ENCODE measurements at regions of chr14 and their contacts with region 1.

Region 1: DNA sequence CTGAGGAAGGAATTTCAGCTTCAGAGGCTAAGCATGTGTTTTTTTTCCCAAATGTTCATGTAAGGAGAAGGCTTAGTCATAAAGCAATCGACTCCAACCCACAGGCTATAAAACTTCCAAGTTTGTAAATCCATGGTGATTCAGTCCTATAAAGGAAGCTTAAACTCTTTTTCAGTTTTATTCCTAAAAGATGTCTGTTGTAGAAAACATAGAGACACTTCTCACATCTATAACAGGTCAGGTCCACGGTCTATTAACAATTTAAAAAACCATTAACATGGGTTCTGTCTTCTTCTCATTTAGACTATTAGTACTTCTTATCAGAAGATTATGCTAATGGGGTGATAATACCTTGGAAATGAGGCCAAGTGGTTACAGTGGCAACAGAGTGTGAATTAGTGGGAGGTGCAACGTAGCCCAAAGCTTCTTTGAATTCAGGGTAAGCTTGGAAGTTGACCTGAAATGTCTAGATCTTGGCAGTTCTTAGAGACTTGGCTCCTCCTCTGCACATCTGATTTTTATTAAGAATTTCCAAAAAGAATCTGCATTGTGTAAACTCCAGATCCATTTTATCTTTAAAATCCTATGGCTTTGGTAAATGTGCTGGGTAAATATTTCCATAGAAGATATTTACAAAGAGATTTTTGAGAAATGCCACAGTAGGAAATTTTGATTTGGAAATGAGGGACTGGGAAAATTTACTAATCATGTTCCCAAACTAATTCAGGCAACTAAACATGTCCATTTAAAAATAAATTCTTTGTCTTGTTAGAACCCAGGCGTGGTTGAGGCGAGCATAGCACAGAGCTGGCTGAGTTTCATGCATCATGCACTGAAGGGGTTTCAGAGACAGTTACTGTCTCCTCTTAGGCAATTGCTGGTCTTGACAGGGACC is 86.4 kb downstream of the EML1 start:
- DNase-seq: no peak
- H3K4me3 ChIP-seq: no peak overlapping the region
- H3K27ac ChIP-seq: peak overlapping the region; percentile 64
- H3K4me1 ChIP-seq: peaks cover 18% of the 10 kb centered on the region
- H3K27me3 ChIP-seq: no peaks in the 10 kb centered on the region
- CTCF ChIP-seq: no peak
- POLR2A ChIP-seq: no peak

Region 2: GRCh38 chr14:99729991-99730868 is 149.4 kb before region 1 on chr14:
- intact Hi-C with region 1: loop called (anchors 2 kb)
- DNase-seq: peak in 1 of 2 donors; percentile 79
- H3K4me3 ChIP-seq: peak overlapping the region; percentile 48 to 67
- H3K27ac ChIP-seq: peak overlapping the region; percentile 85
- H3K4me1 ChIP-seq: peaks cover 26% of the 10 kb centered on the region
- H3K27me3 ChIP-seq: no peaks in the 10 kb centered on the region
- CTCF ChIP-seq: peak; percentile 62 to 91 (median 80)
- POLR2A ChIP-seq: no peak

Measured in vagina (tissue), 2 donors.